ENCODE measurements at regions of chr1 and their contacts with region 1.

Region 1: GRCh38 chr1:156728597-156729462 is at the start of gene ISG20L2:
- DNase-seq: peak; percentile 90 to 99
- H3K4me3 ChIP-seq: peak within 1 kb of the TSS; percentile 82 to 84
- H3K27ac ChIP-seq: peak within 1 kb of the TSS; percentile 95 to 97
- H3K4me1 ChIP-seq: peaks cover 24 to 35% of the 10 kb centered on the region in 2 donors
- H3K27me3 ChIP-seq: no peaks in the 10 kb centered on the region
- CTCF ChIP-seq: no peak
- total RNA-seq, gene ISG20L2: 7.8 TPM

Region 2: DNA sequence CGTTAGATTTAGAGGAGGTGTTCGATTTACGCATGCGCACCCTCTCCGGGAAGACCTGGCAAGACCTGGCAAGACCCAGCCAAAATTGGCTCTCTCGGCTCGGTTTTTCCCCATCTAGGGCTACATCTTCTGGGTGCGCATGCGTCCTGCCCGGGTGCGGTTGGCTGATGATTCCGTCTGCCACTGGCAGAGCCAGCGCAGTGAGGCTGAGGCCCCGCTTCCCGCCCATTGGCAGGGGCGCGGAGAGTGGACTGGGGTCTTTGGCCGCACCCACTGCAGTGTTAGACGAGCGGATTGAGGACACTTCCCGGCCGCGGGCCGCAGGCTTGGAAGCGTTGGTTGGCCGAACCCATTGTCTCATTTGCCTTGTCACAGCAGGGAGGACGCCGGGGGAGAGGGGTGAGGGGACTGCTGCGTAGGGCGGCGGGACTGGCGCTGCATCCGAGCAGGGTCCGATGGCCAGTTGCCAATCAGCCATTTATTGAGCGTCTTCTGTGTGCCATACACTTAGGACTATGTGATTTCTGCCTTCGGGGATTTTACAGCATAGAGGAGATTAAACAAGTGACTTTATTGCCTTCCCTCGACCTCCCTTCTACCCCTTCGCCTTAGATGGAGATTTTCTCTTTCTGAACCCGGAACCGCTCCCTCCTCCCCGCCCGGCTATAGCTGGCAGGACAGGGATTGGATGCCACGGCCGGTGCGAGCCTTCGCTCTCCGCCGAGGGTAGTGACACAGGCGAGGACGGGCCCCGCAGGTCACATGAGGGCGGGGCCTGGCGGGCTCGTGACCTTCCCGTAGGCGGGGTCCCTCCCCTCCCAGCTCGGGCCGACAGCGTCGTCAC is 272.0 kb before region 1 on chr1:
- intact Hi-C with region 1: loop called (anchors 5 kb)
- DNase-seq: peak; percentile 96 to 99
- H3K4me3 ChIP-seq: peak overlapping the region; percentile 62 to 70
- H3K27ac ChIP-seq: peak overlapping the region; percentile 98 to 99
- H3K4me1 ChIP-seq: peaks cover 5 to 17% of the 10 kb centered on the region in 2 donors
- H3K27me3 ChIP-seq: no peaks in the 10 kb centered on the region
- CTCF ChIP-seq: no peak

Region 3: GRCh38 chr1:156689035-156689952 is 39.5 kb before region 1 on chr1:
- intact Hi-C with region 1: loop called (anchors 1 kb)
- DNase-seq: peak in 1 of 2 donors; percentile 89
- H3K4me3 ChIP-seq: peak overlapping the region in 1 of 2 donors; percentile 41
- H3K27ac ChIP-seq: no peak overlapping the region
- H3K4me1 ChIP-seq: peaks cover 3 to 8% of the 10 kb centered on the region in 2 donors
- H3K27me3 ChIP-seq: peaks cover 8% of the 10 kb centered on the region
- CTCF ChIP-seq: peak; percentile 92 to 97 (median 95)

Region 4: DNA sequence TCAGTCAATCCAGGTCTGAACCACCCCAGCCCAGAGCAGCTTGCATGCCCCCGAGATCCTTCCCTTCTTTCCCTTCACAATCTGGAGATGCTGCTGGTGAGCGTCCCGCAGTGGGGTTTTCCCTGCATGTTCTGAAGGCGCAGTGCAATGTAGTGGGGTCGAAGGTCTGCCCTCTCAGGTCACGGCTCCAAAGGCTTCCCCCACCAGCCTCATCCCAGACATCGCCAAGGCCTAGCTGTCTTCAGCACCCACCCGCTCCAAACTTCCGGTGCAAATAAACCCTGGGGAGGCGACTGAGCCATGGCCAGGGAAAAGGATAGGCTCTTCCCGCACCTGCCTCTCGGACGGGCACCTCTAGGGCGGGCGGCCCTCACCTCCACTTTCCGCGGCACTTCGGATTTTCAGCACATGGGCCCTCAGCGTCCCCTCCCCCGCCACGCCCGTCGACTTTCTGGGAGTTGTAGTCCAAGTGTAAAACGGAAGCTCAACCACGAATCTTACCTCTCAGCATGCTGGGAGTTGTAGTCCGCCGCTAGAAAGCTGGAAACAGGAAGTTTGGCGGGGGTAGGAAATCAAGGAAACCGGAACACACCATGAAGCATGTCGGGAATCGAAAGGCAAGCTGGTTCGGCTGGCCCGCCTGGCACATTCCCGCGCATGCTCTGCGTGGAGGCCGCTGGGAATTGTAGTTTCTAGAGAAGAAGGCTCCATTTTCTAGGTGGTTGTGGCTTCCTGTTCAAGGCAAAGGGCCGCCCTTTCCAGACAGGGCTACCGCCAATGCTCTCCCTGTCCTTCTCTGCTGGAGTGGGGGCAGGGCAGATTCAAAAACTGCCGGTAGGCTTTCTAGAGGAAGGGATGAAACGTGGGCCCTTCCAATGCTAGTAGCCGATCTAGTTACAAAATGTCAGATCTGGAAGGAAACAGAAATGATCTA is 12.1 kb after region 1 on chr1 and contains the start of gene MRPL24:
- intact Hi-C with region 1: loop called (anchors 1 kb)
- DNase-seq: peak; percentile 97 to 100
- H3K4me3 ChIP-seq: peak within 1 kb of the TSS; percentile 55 to 91
- H3K27ac ChIP-seq: peak within 1 kb of the TSS; percentile 87 to 91
- H3K4me1 ChIP-seq: peaks cover 4 to 28% of the 10 kb centered on the region in 2 donors
- H3K27me3 ChIP-seq: no peaks in the 10 kb centered on the region
- CTCF ChIP-seq: no peak
- total RNA-seq, gene MRPL24: 17.0 TPM

Region 5: DNA sequence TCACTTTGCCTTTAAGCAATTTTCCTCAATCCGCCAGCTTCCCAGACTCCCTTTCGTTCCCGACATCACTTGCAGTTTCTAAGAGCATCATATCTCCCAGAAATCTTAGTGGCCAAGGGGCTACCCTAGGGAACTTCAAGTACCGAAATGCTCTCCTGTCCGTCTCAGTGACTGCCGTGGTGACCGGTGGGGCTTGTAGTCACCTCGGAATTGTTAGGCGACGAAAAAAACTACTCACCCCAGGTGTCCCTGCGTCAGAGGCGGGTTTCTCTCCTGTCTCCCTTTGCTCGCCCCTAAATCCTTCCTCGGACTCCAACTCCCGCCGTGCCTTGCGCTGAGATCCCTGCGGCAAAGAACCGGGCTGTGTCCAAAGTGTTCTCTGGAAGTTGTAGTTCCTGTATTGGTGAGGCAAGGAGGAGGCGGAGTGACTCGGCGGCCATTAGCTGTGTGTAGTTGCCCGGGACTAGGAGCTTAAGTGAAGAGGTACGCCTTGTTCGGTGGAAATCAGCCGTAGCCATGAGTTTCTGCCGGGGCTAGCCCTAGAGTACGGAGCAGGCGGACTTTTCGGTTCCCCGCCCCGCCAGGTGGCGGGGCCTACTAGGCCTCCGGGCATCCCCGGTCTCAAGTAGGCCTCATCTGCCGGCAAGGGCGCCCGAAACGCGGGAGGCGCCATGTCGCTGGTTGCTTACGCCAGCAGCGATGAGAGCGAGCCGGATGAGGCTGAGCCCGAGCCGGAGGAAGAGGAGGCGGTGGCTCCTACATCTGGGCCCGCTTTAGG is 38.5 kb after region 1 on chr1 and contains the start of gene PRCC:
- intact Hi-C with region 1: loop called (anchors 1 kb)
- DNase-seq: peak; percentile 98 to 100
- H3K4me3 ChIP-seq: peak within 1 kb of the TSS; percentile 78 to 97
- H3K27ac ChIP-seq: peak within 1 kb of the TSS; percentile 90 to 96
- H3K4me1 ChIP-seq: peaks cover 0 to 28% of the 10 kb centered on the region in 2 donors
- H3K27me3 ChIP-seq: no peaks in the 10 kb centered on the region
- CTCF ChIP-seq: no peak
- total RNA-seq, gene PRCC: 16.3 TPM

Region 6: DNA sequence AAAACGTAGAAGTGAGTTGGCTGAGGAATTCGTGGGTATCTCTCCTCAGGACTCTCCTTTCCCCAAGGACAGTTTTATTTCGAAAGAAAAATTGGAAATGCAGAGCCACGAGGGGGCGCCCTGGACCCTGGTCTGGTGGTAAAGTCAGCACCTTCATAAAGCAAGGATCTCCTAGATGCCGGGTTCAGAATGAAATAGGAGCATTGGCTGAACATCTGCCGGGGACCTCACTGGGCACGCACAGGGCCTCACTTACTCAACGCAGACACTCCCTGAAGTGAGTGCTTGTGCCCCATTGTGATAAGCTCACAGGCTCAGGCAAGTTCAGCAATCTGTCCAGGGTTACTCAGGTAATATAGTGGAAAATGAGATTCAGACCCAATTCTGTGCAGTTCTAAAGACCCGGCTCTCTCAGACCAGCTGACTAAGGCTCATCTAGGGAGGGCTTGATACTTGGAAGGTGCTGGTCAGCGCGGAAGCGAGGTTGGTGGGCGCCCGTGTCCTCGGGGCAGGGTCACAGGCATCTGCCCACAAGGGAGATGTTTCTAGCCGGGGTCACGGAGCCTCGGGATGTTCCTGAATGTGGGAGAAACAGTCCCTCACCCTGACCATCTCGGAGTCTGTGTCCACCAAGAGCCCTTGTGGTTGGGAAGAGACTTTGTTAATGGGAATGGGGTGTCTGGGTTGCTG is 465.0 kb after region 1 on chr1:
- intact Hi-C with region 1: no loop called
- DNase-seq: no peak
- H3K4me3 ChIP-seq: no peak overlapping the region
- H3K27ac ChIP-seq: no peak overlapping the region
- H3K4me1 ChIP-seq: no peaks in the 10 kb centered on the region
- H3K27me3 ChIP-seq: no peaks in the 10 kb centered on the region
- CTCF ChIP-seq: peak in 2 of 3 experiments; percentile 21 to 41

Measured in ascending aorta (tissue), 2 donors.